ENCODE measurements at regions of chr7 and their contacts with region 1.

Region 1: DNA sequence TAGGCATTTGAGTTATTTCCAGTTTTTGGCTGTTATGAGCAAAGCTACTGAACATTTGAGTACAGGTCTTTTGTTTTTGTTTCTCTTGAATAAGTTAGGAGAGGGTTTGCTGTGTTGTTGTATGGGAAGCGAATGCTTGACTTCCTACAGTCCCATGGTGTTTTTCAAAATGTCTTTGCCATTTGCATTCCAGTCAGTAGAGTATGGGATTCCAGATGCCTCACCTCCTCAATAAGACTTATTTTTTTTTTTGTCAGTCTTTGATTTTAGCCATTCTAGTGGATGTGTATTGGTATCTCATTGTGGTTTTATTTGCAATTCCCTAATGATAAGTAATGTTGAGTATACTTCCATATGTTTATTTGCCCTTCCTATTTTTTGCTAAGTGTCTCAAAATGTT is 19.4 kb downstream of the CDK13 start:
- DNase-seq: no peak
- CTCF ChIP-seq: no peak

Region 2: DNA sequence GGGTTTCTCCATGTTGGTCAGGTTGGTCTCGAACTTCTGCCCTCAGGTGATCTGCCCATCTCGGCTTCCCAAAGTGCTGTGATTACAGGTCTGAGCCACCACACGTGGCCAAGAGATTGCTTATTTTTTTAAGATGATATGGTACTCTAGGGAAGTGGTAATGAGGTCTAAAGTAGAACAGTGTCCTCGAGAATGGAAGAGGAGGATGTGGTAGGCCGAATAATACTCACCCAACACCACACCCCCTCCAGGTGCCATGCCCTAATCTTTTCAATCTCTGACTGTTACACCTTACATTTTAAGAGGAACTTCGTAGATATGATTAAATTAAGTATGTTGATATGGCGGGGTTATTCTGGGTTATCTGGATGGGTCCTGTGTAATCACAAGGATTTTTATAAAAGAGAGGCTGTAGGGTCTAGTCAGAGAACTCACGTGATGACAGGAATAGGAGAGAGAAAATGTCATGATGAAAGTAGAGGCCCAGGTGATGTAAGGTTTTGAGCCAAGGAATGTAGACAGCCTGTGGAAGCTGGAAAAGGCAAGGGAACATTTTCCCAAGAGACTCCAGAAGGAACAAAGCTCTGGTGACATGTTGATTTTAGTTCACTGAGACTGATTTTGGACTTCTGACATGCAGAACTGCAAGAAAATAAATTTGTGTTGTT is 10.1 kb after region 1 on chr7:
- CTCF ChIA-PET with region 1: interaction called, 12 read pairs
- POLR2A ChIA-PET with region 1: no interaction called
- DNase-seq: no peak
- CTCF ChIP-seq: no peak

Region 3: GRCh38 chr7:40263752-40264390 is 294.4 kb after region 1 on chr7:
- CTCF ChIA-PET with region 1: no interaction called
- POLR2A ChIA-PET with region 1: no interaction called
- DNase-seq: no peak
- CTCF ChIP-seq: no peak

Measured in GM10248 (cell line).